ENCODE measurements at regions of chr12 and their contacts with region 1.

Region 1: DNA sequence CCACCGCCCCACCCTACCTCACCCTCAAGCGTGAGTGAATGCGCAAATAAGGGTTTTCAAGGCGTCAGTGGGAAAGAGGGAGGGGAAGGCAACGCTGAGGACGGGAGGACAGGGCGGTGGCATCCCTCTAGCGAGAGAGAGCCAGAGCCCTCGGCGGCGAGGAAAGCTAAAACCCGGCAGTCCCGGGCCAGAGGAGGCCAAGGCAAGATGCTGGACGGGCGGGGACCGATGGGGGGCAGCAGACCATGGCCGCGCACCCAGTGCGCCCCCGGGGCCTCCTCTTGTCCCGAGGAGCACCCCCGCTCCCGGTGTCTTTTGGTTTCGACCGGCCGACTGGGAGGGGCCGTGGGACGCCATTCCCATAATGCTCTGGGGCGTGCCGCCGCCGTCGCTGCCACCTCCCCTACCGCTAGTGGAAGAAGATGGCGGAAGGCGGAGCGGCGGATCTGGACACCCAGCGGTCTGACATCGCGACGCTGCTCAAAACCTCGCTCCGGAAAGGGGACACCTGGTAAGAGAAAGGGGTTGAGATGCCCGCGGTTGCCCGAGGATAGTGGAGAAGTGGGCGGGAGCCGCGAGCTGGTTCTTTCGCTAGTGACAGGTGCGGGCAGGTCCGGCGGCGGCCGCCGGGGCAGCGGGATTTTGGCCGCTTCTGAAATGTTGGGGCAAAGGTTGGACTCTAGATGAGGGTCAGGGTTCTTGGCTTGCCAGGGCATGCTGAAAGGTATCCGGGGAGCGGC is at the start of gene USP15:
- DNase-seq: peak; percentile 96
- H3K4me3 Mint-ChIP-seq: peak within 1 kb of the TSS; percentile 97
- H3K27ac Mint-ChIP-seq: peak within 1 kb of the TSS; percentile 99
- H3K4me1 Mint-ChIP-seq: peaks cover 65% of the 10 kb centered on the region
- H3K27me3 Mint-ChIP-seq: no peaks in the 10 kb centered on the region
- total RNA-seq, gene USP15: 100 and 110 TPM in 2 replicates

Region 2: GRCh38 chr12:62217466-62218194 is 42.5 kb before region 1 on chr12:
- intact Hi-C with region 1: no loop called
- DNase-seq: no peak
- H3K4me3 Mint-ChIP-seq: no peak overlapping the region
- H3K27ac Mint-ChIP-seq: no peak overlapping the region
- H3K4me1 Mint-ChIP-seq: peaks cover 19% of the 10 kb centered on the region
- H3K27me3 Mint-ChIP-seq: peaks cover 10% of the 10 kb centered on the region

Region 3: GRCh38 chr12:62273724-62274380 is 13.7 kb after region 1 on chr12:
- intact Hi-C with region 1: loop called (anchors 1 kb)
- DNase-seq: no peak
- H3K4me3 Mint-ChIP-seq: no peak overlapping the region
- H3K27ac Mint-ChIP-seq: no peak overlapping the region
- H3K4me1 Mint-ChIP-seq: peaks cover 72% of the 10 kb centered on the region
- H3K27me3 Mint-ChIP-seq: no peaks in the 10 kb centered on the region

Region 4: DNA sequence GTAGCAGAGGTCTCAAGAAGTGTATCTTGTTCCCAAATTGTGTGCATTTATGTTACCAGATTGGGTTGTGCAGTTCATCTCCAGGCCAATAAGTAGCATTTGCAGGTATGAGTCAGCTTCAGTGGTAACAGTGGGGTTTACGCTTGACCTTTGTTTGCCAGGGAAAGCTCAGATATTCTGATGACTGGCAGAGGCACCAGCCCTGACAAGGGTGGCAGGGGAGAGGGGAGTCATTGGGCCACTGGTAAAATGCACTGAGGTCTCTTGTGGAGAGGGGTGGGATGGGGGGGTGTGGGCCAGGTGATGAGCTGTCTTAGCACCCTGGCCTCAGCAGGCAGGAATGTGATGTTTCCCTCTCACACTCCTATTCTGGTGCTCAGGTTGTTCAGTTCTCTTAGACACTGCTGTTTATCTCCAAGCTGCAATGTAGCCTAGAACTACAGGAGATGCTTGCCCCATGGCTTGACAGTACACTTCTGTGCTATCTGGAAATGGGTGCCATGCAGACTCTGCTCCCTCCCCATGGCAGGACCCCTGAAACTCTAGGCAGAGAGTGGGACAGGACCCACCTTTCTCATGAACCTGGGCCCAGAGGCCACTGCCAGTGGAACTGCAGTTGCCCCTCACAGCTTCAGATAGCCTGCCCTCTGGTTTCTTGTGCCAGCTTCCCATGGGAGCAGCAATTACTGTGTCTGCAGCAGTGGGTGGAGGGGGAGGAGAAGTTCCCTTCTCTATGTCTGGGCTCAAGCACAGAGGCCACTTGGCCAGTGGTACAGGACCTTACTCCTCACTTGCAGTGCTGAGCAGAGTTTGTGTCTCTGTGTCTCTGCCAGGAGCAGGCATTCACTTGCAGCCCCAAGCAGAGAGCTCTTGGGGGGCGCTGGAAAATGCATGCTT is 31.9 kb after region 1 on chr12:
- intact Hi-C with region 1: loop called (anchors 2 kb)
- DNase-seq: no peak
- H3K4me3 Mint-ChIP-seq: no peak overlapping the region
- H3K27ac Mint-ChIP-seq: peak overlapping the region; percentile 57
- H3K4me1 Mint-ChIP-seq: peaks cover 86% of the 10 kb centered on the region
- H3K27me3 Mint-ChIP-seq: no peaks in the 10 kb centered on the region

Region 5: GRCh38 chr12:62400135-62400534 is 140.0 kb after region 1 on chr12:
- intact Hi-C with region 1: loop called (anchors 5 kb)
- DNase-seq: no peak
- H3K4me3 Mint-ChIP-seq: no peak overlapping the region
- H3K27ac Mint-ChIP-seq: no peak overlapping the region
- H3K4me1 Mint-ChIP-seq: peaks cover 15% of the 10 kb centered on the region
- H3K27me3 Mint-ChIP-seq: no peaks in the 10 kb centered on the region

Region 6: GRCh38 chr12:62640910-62641448 is 380.8 kb after region 1 on chr12:
- intact Hi-C with region 1: loop called (anchors 2 kb)
- DNase-seq: no peak
- H3K4me3 Mint-ChIP-seq: no peak overlapping the region
- H3K27ac Mint-ChIP-seq: peak overlapping the region; percentile 54
- H3K4me1 Mint-ChIP-seq: peaks cover 17% of the 10 kb centered on the region
- H3K27me3 Mint-ChIP-seq: peaks cover 18% of the 10 kb centered on the region

Region 7: GRCh38 chr12:63779498-63780481 is 1519.6 kb after region 1 on chr12 and contains the start of gene RXYLT1:
- intact Hi-C with region 1: loop called (anchors 10 kb)
- DNase-seq: peak; percentile 75
- H3K4me3 Mint-ChIP-seq: peak within 1 kb of the TSS; percentile 95
- H3K27ac Mint-ChIP-seq: peak within 1 kb of the TSS; percentile 90
- H3K4me1 Mint-ChIP-seq: peaks cover 18% of the 10 kb centered on the region
- H3K27me3 Mint-ChIP-seq: no peaks in the 10 kb centered on the region
- total RNA-seq, gene RXYLT1: 26.5 and 27.3 TPM in 2 replicates